CD8-positive, alpha-beta T cell (primary cell): ENCODE measurements at regions of chr9 and their contacts with region 1.

Region 1: GRCh38 chr9:37422289-37423104 is at the start of gene GRHPR:
- DNase-seq: peak; percentile 73 to 94 (median 88)
- ATAC-seq: peak; percentile 98
- H3K4me3 ChIP-seq: peak within 1 kb of the TSS; percentile 90 to 96
- H3K4me3 Mint-ChIP-seq: peak within 1 kb of the TSS; percentile 96
- H3K27ac ChIP-seq: peak within 1 kb of the TSS; percentile 76 to 82
- H3K27ac Mint-ChIP-seq: peak within 1 kb of the TSS; percentile 93
- H3K4me1 ChIP-seq: peaks cover 20% of the 10 kb centered on the region
- H3K4me1 Mint-ChIP-seq: peaks cover 28% of the 10 kb centered on the region
- H3K27me3 ChIP-seq: no peaks in the 10 kb centered on the region
- H3K27me3 Mint-ChIP-seq: no peaks in the 10 kb centered on the region
- CTCF ChIP-seq: no peak
- total RNA-seq, gene GRHPR: 25.5 to 25.8 TPM

Region 2: GRCh38 chr9:36080519-36080918 is 1342.0 kb before region 1 on chr9:
- CTCF ChIA-PET with region 1: no interaction called
- POLR2A ChIA-PET with region 1: no interaction called
- intact Hi-C with region 1: no loop called
- DNase-seq: no peak
- ATAC-seq: no peak
- H3K4me3 ChIP-seq: no peak overlapping the region
- H3K4me3 Mint-ChIP-seq: no peak overlapping the region
- H3K27ac ChIP-seq: no peak overlapping the region
- H3K27ac Mint-ChIP-seq: no peak overlapping the region
- H3K4me1 ChIP-seq: no peaks in the 10 kb centered on the region
- H3K4me1 Mint-ChIP-seq: no peaks in the 10 kb centered on the region
- H3K27me3 ChIP-seq: no peaks in the 10 kb centered on the region
- H3K27me3 Mint-ChIP-seq: no peaks in the 10 kb centered on the region
- CTCF ChIP-seq: no peak

Region 3: DNA sequence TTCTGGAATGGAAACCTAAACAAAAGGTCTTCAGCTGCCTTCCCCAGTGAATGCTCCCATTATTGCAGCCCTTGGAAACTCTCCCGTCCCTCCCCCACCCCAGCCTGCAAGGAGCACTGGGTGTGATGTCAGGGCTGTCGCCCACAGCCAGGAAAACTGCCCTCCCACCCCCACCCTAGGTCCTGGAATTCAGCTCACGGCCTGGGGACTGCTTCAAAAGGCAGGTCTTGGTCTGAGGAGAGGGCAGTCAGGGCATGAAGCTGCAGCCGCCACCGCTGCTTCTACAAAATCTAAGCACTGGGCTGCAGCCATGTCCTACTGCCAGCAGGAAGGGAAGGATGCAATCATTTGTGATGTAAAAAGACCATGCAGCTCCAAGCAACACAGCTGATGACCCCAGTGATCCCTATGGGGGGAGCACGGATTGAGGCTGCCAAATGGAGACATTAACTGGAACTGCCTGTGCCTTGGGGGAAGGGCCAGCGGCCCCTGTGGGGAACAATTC is 11.4 kb after region 1 on chr9:
- CTCF ChIA-PET with region 1: no interaction called
- POLR2A ChIA-PET with region 1: no interaction called
- intact Hi-C with region 1: no loop called
- DNase-seq: no peak
- ATAC-seq: no peak
- H3K4me3 ChIP-seq: no peak overlapping the region
- H3K4me3 Mint-ChIP-seq: no peak overlapping the region
- H3K27ac ChIP-seq: no peak overlapping the region
- H3K27ac Mint-ChIP-seq: no peak overlapping the region
- H3K4me1 ChIP-seq: no peaks in the 10 kb centered on the region
- H3K4me1 Mint-ChIP-seq: peaks cover 3% of the 10 kb centered on the region
- H3K27me3 ChIP-seq: no peaks in the 10 kb centered on the region
- H3K27me3 Mint-ChIP-seq: no peaks in the 10 kb centered on the region
- CTCF ChIP-seq: no peak

Region 4: GRCh38 chr9:37465249-37466036 is 42.9 kb after region 1 on chr9 and contains the start of gene ZBTB5:
- CTCF ChIA-PET with region 1: no interaction called
- POLR2A ChIA-PET with region 1: interaction called, 4 read pairs
- intact Hi-C with region 1: loop called (anchors 1 kb)
- DNase-seq: peak; percentile 97 to 100 (median 99)
- ATAC-seq: peak; percentile 79
- H3K4me3 ChIP-seq: peak within 1 kb of the TSS; percentile 91 to 97
- H3K4me3 Mint-ChIP-seq: peak within 1 kb of the TSS; percentile 95
- H3K27ac ChIP-seq: peak within 1 kb of the TSS; percentile 86 to 97
- H3K27ac Mint-ChIP-seq: peak within 1 kb of the TSS; percentile 98
- H3K4me1 ChIP-seq: peaks cover 23% of the 10 kb centered on the region
- H3K4me1 Mint-ChIP-seq: peaks cover 40% of the 10 kb centered on the region
- H3K27me3 ChIP-seq: no peaks in the 10 kb centered on the region
- H3K27me3 Mint-ChIP-seq: no peaks in the 10 kb centered on the region
- CTCF ChIP-seq: no peak
- total RNA-seq, gene ZBTB5: 18.5 to 18.7 TPM

Region 5: DNA sequence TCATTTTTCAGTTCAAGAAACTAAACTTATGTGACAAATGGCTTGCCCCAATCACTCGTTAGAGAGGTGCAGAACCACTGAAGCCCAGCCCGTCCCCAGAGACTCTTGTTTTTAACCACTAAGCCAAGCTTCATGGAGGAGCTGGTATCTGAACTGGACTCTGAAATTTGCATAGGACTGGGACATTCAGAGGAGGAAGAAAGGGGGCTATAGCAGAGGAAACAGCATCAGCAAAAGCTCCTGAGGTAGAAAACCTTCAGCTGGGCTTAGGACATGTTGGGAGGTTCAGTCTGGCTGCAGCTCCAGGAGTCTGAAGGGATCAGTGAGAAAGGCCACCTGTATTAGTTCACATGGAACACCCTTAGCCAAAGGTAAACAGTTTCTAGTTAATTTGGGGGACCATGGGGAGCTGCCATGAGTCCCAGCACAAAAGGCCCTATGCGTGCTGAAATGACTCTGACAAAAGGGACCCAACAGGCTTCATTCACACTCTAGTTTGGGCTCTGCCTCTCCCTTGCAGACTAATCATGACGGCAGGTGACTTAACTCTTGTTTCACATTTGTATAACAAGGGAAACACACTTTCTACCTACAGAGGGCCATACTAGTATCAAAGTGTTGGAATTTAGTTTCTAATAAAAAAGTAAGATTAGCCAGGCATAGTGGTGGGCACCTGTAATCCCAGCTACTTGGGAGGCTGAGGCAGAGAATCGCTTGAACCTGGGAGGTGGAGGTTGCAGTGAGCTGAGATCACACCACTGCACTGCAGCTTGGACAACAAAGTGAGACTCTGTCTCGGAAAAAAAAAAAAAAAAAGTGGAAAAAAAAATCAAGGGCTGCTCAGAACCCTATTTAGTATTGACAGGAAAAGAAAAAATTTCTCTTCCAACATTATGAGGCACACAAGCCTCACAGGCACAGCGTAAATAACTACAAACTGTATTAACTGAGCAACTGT is 143.4 kb after region 1 on chr9:
- CTCF ChIA-PET with region 1: no interaction called
- POLR2A ChIA-PET with region 1: no interaction called
- intact Hi-C with region 1: no loop called
- DNase-seq: no peak
- ATAC-seq: no peak
- H3K4me3 ChIP-seq: no peak overlapping the region
- H3K4me3 Mint-ChIP-seq: no peak overlapping the region
- H3K27ac ChIP-seq: no peak overlapping the region
- H3K27ac Mint-ChIP-seq: no peak overlapping the region
- H3K4me1 ChIP-seq: no peaks in the 10 kb centered on the region
- H3K4me1 Mint-ChIP-seq: no peaks in the 10 kb centered on the region
- H3K27me3 ChIP-seq: no peaks in the 10 kb centered on the region
- H3K27me3 Mint-ChIP-seq: no peaks in the 10 kb centered on the region
- CTCF ChIP-seq: no peak